ENCODE measurements at regions of chr20 and their contacts with region 1.

Region 1: GRCh38 chr20:35821807-35822242 is 50.0 kb downstream of the PHF20 start:
- DNase-seq: peak; percentile 79
- ATAC-seq: peak; percentile 80
- H3K4me3 ChIP-seq: no peak overlapping the region
- H3K27ac ChIP-seq: peak overlapping the region; percentile 58
- H3K4me1 ChIP-seq: peaks cover 17% of the 10 kb centered on the region
- H3K27me3 ChIP-seq: no peaks in the 10 kb centered on the region
- CTCF ChIP-seq: no peak
- POLR2A ChIP-seq: no peak
- RAD21 ChIP-seq: no peak

Region 2: DNA sequence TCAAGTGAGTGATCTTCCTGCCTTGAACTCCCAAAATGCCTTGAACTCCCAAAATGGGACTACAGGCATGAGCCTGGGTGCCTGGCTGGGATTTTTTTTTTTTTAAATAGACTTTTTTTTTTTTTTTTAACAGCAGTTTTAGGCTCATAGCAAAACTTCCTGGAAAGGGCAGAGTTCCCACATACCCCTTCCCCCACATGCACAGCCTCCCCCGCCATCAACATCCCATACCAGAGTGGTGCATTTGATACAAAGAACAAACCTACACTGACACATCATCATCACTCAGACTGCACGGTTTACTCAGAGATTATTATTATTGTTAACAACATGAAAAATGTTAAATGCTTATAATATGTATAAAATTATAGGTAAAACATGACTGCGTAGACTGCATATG is 436.1 kb before region 1 on chr20:
- CTCF ChIA-PET with region 1: no interaction called
- POLR2A ChIA-PET with region 1: no interaction called
- dilution Hi-C with region 1: no loop called
- in situ Hi-C with region 1: no loop called
- intact Hi-C with region 1: no loop called
- DNase-seq: peak; percentile 43
- ATAC-seq: peak; percentile 65
- H3K4me3 ChIP-seq: no peak overlapping the region
- H3K27ac ChIP-seq: no peak overlapping the region
- H3K4me1 ChIP-seq: peaks cover 6% of the 10 kb centered on the region; the same call in 1 of the 2 replicates
- H3K27me3 ChIP-seq: no peaks in the 10 kb centered on the region
- CTCF ChIP-seq: no peak
- POLR2A ChIP-seq: no peak
- RAD21 ChIP-seq: no peak

Region 3: DNA sequence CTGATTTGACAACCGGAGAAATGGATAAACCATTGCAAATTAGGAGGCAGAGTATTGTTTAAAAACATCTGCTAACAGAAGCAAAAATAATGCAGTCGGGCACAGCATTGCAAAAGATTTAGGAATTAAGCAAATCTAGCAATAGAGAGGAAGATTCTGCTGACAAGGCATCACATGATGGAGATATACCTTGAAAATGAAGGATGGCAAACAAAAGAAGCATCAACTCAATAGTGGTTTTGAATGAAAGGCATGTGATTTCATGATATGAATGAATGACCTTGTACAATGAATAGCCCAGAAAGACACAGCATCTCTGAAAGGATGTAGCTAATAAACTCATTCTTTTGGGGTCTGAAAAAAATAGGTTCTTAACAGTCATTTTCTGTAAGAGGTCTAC is 71.2 kb before region 1 on chr20:
- CTCF ChIA-PET with region 1: no interaction called
- POLR2A ChIA-PET with region 1: no interaction called
- dilution Hi-C with region 1: no loop called
- in situ Hi-C with region 1: no loop called
- intact Hi-C with region 1: loop called (anchors 5 kb)
- DNase-seq: no peak
- ATAC-seq: no peak
- H3K4me3 ChIP-seq: no peak overlapping the region
- H3K27ac ChIP-seq: no peak overlapping the region
- H3K4me1 ChIP-seq: peaks cover 3% of the 10 kb centered on the region; the same call in 1 of the 2 replicates
- H3K27me3 ChIP-seq: peaks cover 17% of the 10 kb centered on the region
- CTCF ChIP-seq: no peak
- POLR2A ChIP-seq: no peak
- RAD21 ChIP-seq: no peak

Region 4: GRCh38 chr20:35806075-35806474 is 15.8 kb before region 1 on chr20:
- CTCF ChIA-PET with region 1: no interaction called
- POLR2A ChIA-PET with region 1: no interaction called
- dilution Hi-C with region 1: no loop called
- in situ Hi-C with region 1: no loop called
- intact Hi-C with region 1: no loop called
- DNase-seq: no peak
- ATAC-seq: no peak
- H3K4me3 ChIP-seq: no peak overlapping the region
- H3K27ac ChIP-seq: no peak overlapping the region
- H3K4me1 ChIP-seq: no peaks in the 10 kb centered on the region; the same call in 1 of the 2 replicates
- H3K27me3 ChIP-seq: no peaks in the 10 kb centered on the region
- CTCF ChIP-seq: no peak
- POLR2A ChIP-seq: no peak
- RAD21 ChIP-seq: no peak

Region 5: DNA sequence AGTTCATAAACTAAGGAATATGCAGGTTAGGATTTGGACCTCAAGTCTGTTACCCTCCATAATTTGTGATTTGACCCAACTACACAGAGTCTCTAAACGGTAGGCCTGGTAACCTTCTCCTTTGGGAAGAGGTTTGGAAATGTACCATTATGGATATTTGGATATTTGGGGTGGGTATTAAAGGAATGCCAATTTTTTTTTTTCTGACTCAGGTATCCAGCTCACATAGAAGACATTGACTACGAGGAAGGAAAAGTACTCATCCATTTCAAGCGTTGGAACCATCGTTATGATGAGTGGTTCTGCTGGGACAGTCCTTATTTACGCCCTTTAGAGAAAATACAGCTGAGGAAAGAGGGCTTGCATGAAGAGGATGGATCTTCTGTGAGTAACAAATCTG is 20.5 kb after region 1 on chr20:
- CTCF ChIA-PET with region 1: interaction called, 5 read pairs
- POLR2A ChIA-PET with region 1: no interaction called
- dilution Hi-C with region 1: no loop called
- in situ Hi-C with region 1: no loop called
- intact Hi-C with region 1: loop called (anchors 1 kb)
- DNase-seq: no peak
- ATAC-seq: no peak
- H3K4me3 ChIP-seq: no peak overlapping the region
- H3K27ac ChIP-seq: no peak overlapping the region
- H3K4me1 ChIP-seq: peaks cover 6% of the 10 kb centered on the region; the same call in 1 of the 2 replicates
- H3K27me3 ChIP-seq: no peaks in the 10 kb centered on the region
- CTCF ChIP-seq: no peak
- POLR2A ChIP-seq: no peak
- RAD21 ChIP-seq: no peak

Region 6: GRCh38 chr20:36035745-36036144 is 213.9 kb after region 1 on chr20:
- CTCF ChIA-PET with region 1: no interaction called
- POLR2A ChIA-PET with region 1: no interaction called
- dilution Hi-C with region 1: no loop called
- in situ Hi-C with region 1: no loop called
- intact Hi-C with region 1: no loop called
- DNase-seq: no peak
- ATAC-seq: peak; percentile 49
- H3K4me3 ChIP-seq: no peak overlapping the region
- H3K27ac ChIP-seq: no peak overlapping the region
- H3K4me1 ChIP-seq: no peaks in the 10 kb centered on the region
- H3K27me3 ChIP-seq: peaks cover 6% of the 10 kb centered on the region
- CTCF ChIP-seq: no peak
- POLR2A ChIP-seq: no peak
- RAD21 ChIP-seq: no peak

Measured in IMR-90 (cell line).